Activated CD8-positive, alpha-beta T cell treated with anti-CD3 and anti-CD28 coated beads, Interleukin-2, amount 10 ng/mL, durations not matched to agents 7 days and 5 days (primary cell): ENCODE measurements at regions of chr15 and their contacts with region 1.

Region 1: DNA sequence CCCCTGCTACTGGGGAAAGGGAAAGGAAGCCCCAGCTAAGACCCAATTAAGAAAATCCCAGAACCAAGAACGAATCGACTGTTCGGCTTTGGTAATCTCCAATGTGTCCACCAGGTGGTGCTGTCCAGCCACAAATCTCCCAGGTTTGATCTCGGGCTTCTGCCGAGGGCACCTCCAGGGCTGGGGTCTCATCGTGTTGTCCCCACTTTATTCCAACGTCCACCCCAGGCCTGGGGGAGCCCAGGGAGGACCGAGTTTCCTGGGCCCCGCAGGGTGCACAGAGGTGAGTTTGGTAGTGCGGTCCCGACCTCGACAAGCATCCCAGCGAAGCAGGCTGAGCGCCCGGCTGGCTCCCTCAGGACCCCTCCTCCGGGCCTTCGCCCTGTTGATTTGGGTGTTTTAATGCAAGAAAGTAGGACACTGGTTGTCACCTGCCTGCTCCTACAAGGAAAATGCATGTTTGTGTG is 185.1 kb downstream of the GOLGA6L6 start:
- DNase-seq: peak; percentile 80
- ATAC-seq: peak; percentile 69
- H3K4me3 Mint-ChIP-seq: no peak overlapping the region
- H3K27ac Mint-ChIP-seq: no peak overlapping the region
- H3K4me1 Mint-ChIP-seq: peaks cover 2% of the 10 kb centered on the region
- H3K27me3 Mint-ChIP-seq: no peaks in the 10 kb centered on the region

Region 2: GRCh38 chr15:20340931-20341661 is 15.4 kb before region 1 on chr15:
- CTCF ChIA-PET with region 1: no interaction called
- POLR2A ChIA-PET with region 1: no interaction called
- DNase-seq: peak; percentile 24
- ATAC-seq: no peak
- H3K4me3 Mint-ChIP-seq: no peak overlapping the region
- H3K27ac Mint-ChIP-seq: no peak overlapping the region
- H3K4me1 Mint-ChIP-seq: no peaks in the 10 kb centered on the region
- H3K27me3 Mint-ChIP-seq: no peaks in the 10 kb centered on the region

Region 3: DNA sequence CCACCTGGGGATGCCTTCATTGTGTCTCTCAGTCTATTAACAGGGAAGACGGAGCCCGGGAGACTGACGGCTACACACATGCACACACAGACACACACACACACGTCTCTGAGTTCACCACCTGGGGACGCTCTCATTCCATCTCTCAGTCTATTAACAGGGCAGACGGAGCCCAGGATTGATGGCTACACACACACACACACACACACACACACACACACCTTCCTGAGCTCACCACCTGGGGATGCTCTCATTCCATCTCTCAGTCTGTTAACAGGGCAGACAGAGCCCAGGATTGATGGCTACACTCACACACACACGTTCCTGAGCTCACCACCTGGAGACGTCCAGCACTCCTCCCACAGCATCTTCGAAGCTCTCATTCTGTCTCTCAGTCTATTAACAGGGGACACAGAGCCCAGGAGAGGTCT is 1867.8 kb after region 1 on chr15:
- CTCF ChIA-PET with region 1: interaction called, 57 read pairs
- POLR2A ChIA-PET with region 1: no interaction called
- DNase-seq: no peak
- ATAC-seq: no peak
- H3K4me3 Mint-ChIP-seq: no peak overlapping the region
- H3K27ac Mint-ChIP-seq: peak overlapping the region; percentile 18
- H3K4me1 Mint-ChIP-seq: peaks cover 27% of the 10 kb centered on the region
- H3K27me3 Mint-ChIP-seq: peaks cover 3% of the 10 kb centered on the region